HAP-1 (cell line): ENCODE measurements at regions of chr11 and their contacts with region 1.

Region 1: DNA sequence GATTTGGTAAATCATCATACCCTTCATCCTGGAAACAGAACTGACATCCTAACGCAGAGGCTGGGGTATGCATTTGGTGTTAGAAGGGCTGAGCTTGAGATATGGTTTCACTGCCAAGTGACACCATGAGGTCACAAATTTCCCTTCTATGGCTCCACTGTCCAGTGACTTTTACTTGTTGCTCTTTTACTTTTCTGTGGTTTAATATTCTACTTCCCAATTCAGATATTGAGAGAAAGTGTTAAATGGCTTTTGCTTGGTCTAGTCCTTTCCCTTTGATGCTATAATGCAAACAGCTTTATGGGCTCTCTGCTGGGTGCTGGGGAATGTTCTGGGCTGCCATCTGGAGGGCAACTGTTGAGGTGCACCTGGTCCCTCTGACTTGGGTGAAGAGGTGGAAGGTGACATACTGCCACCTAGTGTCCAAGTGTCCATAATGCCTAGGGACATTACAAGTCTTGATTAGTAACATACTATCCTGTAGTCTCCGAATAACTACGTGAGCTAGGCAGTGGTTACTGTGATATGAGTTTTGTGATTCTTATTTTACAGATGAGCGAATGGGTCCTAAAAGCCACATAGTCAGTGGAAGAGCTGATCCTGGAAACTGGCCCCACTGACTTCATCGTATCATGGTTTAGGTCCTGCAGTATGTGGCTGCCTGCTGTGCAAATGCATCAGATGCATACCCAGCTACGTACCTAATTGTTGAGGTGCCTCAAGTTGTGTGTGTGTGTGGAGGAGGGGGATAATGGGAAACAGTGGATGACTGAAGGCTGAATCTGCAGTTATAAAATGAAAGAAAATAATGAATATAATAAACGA is 149.1 kb upstream of the RAG2 start:
- DNase-seq: peak; percentile 77 to 94
- H3K4me3 ChIP-seq: no peak overlapping the region
- H3K4me1 ChIP-seq: no peaks in the 10 kb centered on the region
- H3K27me3 ChIP-seq: peaks cover 7% of the 10 kb centered on the region; the same call in 1 of the 2 replicates

Region 2: DNA sequence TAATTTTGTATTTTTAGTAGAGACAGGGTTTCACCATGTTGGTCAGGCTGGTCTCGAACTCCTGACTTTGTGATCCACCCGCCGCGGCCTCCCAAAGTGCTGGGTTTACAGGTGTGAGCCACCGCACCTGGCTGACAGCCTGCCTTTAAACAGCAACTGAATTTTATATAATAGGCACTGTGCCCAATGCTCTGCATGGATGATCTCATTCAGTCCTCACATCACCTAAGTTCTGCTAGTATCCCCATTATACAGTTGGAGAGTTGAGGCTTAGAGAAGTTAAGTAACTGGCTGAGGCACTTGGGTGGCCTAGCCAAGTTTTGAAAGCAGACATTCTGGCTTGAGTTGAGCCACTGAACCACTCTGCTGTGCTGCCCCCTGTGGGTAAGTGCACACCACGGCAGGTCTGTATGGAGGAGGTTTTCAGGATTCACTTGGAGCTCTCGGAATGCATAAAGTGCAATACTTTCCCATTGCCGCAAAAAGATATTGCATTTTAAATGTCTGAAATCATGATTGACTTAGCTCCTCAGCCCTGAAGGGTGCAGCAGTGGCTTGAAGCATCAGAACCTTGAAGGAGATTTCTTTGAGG is 690.8 kb before region 1 on chr11:
- in situ Hi-C with region 1: no loop called
- DNase-seq: peak in 1 of 2 experiments; percentile 60
- H3K4me3 ChIP-seq: no peak overlapping the region
- H3K4me1 ChIP-seq: no peaks in the 10 kb centered on the region
- H3K27me3 ChIP-seq: no peaks in the 10 kb centered on the region

Region 3: GRCh38 chr11:36564376-36565030 is 182.6 kb before region 1 on chr11:
- in situ Hi-C with region 1: loop called (anchors 5 kb)
- DNase-seq: peak; percentile 66 to 69
- H3K4me3 ChIP-seq: no peak overlapping the region
- H3K4me1 ChIP-seq: peaks cover 2% of the 10 kb centered on the region; the same call in 1 of the 2 replicates
- H3K27me3 ChIP-seq: no peaks in the 10 kb centered on the region; the same call in 1 of the 2 replicates

Region 4: GRCh38 chr11:36702330-36703055 is 44.6 kb before region 1 on chr11:
- in situ Hi-C with region 1: loop called (anchors 5 kb)
- DNase-seq: peak; percentile 49 to 72
- H3K4me3 ChIP-seq: no peak overlapping the region
- H3K4me1 ChIP-seq: no peaks in the 10 kb centered on the region
- H3K27me3 ChIP-seq: peaks cover 4% of the 10 kb centered on the region; the same call in 1 of the 2 replicates